ENCODE measurements at regions of chr3 and their contacts with region 1.

Region 1: GRCh38 chr3:49661281-49661680 is 12.9 kb upstream of the APEH start:
- DNase-seq: no peak

Region 2: DNA sequence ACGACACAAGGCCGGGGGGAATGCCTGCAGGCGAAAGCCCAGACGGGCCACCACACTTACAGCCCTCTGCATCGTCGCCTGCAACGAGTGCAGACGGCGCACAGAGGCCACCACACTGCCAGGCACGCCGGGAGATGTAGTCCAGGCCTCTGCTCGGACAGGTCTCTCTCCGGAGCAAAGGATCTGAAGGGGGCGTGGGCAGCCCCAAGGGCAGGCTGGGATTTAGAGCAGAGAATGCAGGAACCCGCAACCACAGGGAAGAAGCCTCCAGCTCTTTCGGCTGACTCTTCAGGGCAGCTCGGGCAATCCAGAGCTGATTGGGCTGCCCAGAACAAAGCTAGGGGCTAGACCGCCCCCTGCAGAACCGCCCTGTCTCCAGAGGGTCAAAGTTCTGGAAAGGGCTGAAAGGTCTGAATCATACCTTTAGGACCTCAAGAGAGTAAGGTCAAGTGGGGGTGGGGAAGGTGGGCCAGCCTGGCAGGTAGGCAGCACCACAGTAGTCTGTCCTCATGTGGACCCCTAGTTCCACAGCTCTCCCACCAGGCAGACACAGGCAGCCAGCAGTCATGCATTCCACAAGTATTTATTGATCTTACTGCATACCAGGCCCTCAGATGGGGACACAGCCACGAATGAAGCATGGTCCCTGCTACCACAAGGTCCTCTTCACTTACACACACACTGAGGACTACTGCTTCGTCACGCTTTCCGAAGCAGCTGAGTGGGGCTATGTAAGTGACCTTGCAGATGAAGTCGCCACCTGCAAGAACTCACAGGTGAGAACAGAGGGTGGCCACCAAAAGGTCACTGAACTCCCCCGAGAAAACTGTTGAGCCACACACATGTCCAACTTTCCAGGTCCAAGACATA is 238.7 kb before region 1 on chr3 and contains the start of gene AMT:
- intact Hi-C with region 1: no loop called
- DNase-seq: peak; percentile 87
- total RNA-seq, gene AMT: 1.0 to 6.1 TPM

Region 3: GRCh38 chr3:49554633-49555265 is 106.5 kb before region 1 on chr3:
- intact Hi-C with region 1: loop called in 1 of 2 experiments (anchors 5 kb)
- DNase-seq: peak; percentile 86

Measured in posterior vena cava (tissue), 2 donors.